ENCODE measurements at regions of chr15 and their contacts with region 1.

Region 1: GRCh38 chr15:78105466-78106332 is 13.3 kb downstream of the SH2D7 start:
- DNase-seq: no peak
- H3K4me3 ChIP-seq: no peak overlapping the region
- H3K27ac ChIP-seq: no peak overlapping the region
- H3K4me1 ChIP-seq: peaks cover 0 to 3% (median 0%) of the 10 kb centered on the region in 4 donors
- H3K27me3 ChIP-seq: no peaks in the 10 kb centered on the region
- CTCF ChIP-seq: no peak
- EP300 ChIP-seq: no peak
- POLR2A ChIP-seq: no peak

Region 2: GRCh38 chr15:77966540-77967290 is 139.0 kb before region 1 on chr15:
- intact Hi-C with region 1: loop called (anchors 1 kb)
- DNase-seq: no peak
- H3K4me3 ChIP-seq: no peak overlapping the region
- H3K27ac ChIP-seq: no peak overlapping the region
- H3K4me1 ChIP-seq: no peaks in the 10 kb centered on the region
- H3K27me3 ChIP-seq: no peaks in the 10 kb centered on the region
- CTCF ChIP-seq: peak; percentile 85 to 88 (median 86)
- EP300 ChIP-seq: no peak
- POLR2A ChIP-seq: no peak

Region 3: DNA sequence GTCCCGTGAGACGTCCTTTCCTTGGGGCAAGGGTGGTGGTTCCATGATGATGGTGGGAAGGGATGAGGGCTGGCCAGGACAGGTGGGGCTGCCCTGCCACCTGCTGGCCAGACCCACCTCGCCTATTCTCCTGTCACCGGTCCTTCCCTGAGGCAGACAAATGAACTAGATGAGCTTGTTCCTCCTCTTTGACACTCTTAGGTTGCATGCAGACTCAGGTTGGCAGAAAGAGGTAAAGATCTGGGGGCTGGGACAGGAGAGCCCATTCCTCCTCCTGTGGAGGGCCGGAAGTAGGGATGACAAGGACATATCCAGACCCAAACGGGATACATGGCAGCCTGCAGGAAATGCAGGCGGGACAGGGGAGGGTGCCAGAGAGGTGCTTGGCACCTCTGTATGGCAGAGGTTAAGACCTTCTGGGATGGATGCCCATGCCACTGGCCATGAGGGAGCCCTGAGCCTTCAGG is 90.1 kb after region 1 on chr15:
- intact Hi-C with region 1: loop called (anchors 5 kb)
- DNase-seq: no peak
- H3K4me3 ChIP-seq: no peak overlapping the region
- H3K27ac ChIP-seq: no peak overlapping the region
- H3K4me1 ChIP-seq: no peaks in the 10 kb centered on the region
- H3K27me3 ChIP-seq: no peaks in the 10 kb centered on the region
- CTCF ChIP-seq: peak; percentile 44 to 64 (median 53)
- EP300 ChIP-seq: no peak
- POLR2A ChIP-seq: no peak

Region 4: DNA sequence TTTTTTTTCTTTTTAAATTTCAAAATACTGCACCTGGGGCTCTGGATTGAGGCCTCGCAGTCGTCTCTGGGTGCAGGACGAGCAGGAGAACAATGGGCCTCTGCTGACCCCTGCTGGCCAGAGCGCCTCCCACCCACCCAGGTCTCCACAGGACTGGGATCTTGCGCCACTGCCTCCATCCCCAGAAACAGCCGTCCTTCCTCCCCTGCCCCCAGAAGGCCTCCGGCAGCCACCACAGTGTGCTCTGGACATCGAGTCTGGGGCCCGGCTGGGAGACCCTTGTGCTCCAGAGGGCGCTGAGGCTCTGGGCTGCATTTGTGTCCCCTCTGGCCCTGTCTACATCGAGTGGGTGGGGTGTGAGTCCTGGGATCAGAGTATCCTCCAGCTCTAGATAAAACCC is 135.3 kb after region 1 on chr15:
- intact Hi-C with region 1: loop called (anchors 5 kb)
- DNase-seq: peak; percentile 96
- H3K4me3 ChIP-seq: no peak overlapping the region
- H3K27ac ChIP-seq: no peak overlapping the region
- H3K4me1 ChIP-seq: peaks cover 0 to 6% (median 5%) of the 10 kb centered on the region in 4 donors
- H3K27me3 ChIP-seq: no peaks in the 10 kb centered on the region
- CTCF ChIP-seq: peak; percentile 87 to 95 (median 88)
- EP300 ChIP-seq: no peak
- POLR2A ChIP-seq: no peak

Region 5: DNA sequence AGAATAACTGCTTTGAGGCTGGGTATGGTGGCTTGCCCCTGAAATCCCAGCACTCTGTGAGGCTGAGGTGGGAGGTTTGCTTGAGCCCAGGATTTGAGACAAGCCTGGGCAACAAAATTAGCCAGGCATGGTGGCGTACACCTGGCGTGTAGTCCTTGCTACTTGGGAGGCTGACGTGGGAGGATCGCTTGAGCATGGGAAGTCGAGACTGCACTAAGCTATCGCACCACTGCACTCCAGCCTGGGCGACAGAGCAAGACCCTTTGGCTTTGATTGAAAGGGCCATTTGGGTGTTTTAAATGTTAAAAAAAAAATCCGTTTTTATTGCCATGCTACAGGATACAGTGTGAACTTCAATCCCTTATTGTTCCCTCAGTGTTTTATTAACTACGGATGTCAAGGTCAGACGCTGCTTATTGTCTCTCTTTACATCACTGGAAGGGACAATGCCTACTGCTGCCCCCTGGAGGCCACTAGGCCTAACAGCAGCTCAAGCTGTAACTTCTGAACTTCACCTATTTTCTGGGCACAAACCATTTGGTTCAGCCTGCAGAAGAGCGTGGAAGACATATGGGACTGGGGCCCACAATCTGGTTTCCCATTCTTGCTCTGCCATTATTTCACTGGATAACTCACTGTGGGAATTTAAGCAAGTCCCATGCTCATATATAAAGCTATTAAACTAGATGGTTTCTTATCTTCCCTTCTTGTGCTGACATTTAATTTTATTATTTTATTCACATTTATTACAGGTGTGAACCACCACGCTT is 317.1 kb after region 1 on chr15:
- intact Hi-C with region 1: loop called (anchors 5 kb)
- DNase-seq: no peak
- H3K4me3 ChIP-seq: no peak overlapping the region
- H3K27ac ChIP-seq: no peak overlapping the region
- H3K4me1 ChIP-seq: peaks cover 0 to 6% (median 2%) of the 10 kb centered on the region in 4 donors
- H3K27me3 ChIP-seq: peaks cover 0 to 11% (median 0%) of the 10 kb centered on the region in 4 donors
- CTCF ChIP-seq: peak; percentile 86 to 88 (median 87)
- EP300 ChIP-seq: no peak
- POLR2A ChIP-seq: no peak

Measured in esophagus muscularis mucosa (tissue), 4 donors.